ENCODE measurements at regions of chr14 and their contacts with region 1.

Region 1: DNA sequence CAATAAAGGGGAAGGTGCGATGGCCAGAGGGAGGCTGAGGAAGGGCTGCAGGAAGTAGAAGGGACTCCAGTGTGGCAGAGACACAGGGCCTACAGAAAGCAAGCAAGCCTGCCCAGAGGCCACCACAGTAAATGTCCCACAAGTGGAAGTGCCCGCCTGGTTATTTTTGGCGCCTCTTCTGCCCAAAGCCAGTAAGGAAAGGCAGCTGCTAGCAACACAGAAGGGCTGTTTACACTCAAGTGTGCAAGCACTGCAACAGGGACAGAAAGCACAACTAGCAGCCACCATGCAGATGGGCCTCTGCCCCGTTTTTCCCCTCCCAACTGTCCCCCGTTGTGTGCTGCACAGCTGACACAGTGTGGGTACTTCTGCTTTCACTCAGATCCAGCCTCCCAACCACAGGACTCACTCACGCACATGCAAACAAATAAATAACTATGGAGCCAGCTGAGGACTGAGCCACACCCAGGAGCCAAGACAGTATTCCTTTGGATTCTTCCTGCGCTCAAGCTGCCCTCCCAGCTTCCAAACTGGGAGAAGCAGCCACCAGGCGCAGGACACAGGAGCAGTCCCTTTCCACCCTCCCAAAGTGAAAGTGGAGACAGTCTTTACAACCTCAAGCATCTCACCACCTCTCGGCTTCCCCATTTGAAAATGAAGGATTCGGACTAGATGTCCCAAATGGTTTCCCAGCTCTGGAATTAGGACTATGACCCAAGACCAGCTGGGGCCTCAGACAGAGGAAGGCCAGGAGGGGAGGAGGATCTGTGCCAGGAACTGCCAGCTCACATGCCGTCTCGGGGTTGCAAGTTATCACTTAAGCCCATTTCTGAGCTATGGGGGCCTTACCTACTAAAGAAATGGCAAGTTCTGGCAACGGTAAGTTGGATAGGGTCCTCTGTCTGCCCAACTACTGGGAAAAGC is 40.0 kb upstream of the PNMA1 start:
- DNase-seq: peak in 2 of 5 donors; percentile 35 to 69
- H3K4me3 ChIP-seq: peak overlapping the region; percentile 43 to 53
- H3K4me3 Mint-ChIP-seq: peak overlapping the region; percentile 82 to 94 (median 85)
- H3K27ac ChIP-seq: peak overlapping the region; percentile 98
- H3K27ac Mint-ChIP-seq: peak overlapping the region; percentile 92 to 99 (median 98)
- H3K4me1 ChIP-seq: peaks cover 92% of the 10 kb centered on the region
- H3K4me1 Mint-ChIP-seq: peaks cover 75 to 96% (median 86%) of the 10 kb centered on the region in 4 donors
- H3K27me3 ChIP-seq: no peaks in the 10 kb centered on the region
- H3K27me3 Mint-ChIP-seq: no peaks in the 10 kb centered on the region

Region 2: GRCh38 chr14:73686901-73687300 is 67.3 kb before region 1 on chr14:
- CTCF ChIA-PET with region 1: no interaction called
- POLR2A ChIA-PET with region 1: no interaction called
- intact Hi-C with region 1: no loop called
- DNase-seq: no peak
- H3K4me3 ChIP-seq: no peak overlapping the region
- H3K4me3 Mint-ChIP-seq: no peak overlapping the region
- H3K27ac ChIP-seq: no peak overlapping the region
- H3K27ac Mint-ChIP-seq: no peak overlapping the region
- H3K4me1 ChIP-seq: no peaks in the 10 kb centered on the region
- H3K4me1 Mint-ChIP-seq: no peaks in the 10 kb centered on the region
- H3K27me3 ChIP-seq: no peaks in the 10 kb centered on the region
- H3K27me3 Mint-ChIP-seq: no peaks in the 10 kb centered on the region

Region 3: DNA sequence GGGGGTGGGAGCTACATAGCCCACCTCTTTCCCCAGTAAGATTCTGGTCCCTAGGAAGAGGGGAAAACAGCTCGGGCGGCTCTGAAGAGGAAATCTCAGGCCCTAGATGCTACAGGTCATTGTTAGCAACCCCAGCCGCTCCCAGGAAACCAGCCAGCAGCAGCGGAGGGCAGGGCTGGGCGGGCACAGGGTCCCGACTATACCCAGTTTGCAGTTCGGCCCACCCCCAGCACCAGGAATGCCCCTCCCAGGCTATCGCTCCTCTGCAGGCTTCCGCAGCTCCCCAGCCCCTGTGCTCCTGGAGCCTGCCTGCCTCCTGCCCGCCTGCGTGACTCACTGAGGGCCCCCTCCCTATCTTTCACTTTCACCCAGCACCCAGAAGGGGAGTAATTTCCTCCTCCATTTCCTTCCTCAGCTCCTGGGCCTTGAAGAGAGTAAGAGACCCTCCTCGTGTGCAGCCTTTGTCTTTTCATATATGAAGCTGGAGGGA is 12.8 kb before region 1 on chr14:
- CTCF ChIA-PET with region 1: interaction called, 100 read pairs
- POLR2A ChIA-PET with region 1: interaction called, 421 read pairs
- intact Hi-C with region 1: loop called (anchors 1 kb)
- DNase-seq: peak; percentile 56 to 87 (median 62)
- H3K4me3 ChIP-seq: peak overlapping the region; percentile 36 to 49
- H3K4me3 Mint-ChIP-seq: peak overlapping the region; percentile 79 to 90 (median 86)
- H3K27ac ChIP-seq: peak overlapping the region; percentile 66
- H3K27ac Mint-ChIP-seq: peak overlapping the region; percentile 93 to 98 (median 95)
- H3K4me1 ChIP-seq: peaks cover 77% of the 10 kb centered on the region
- H3K4me1 Mint-ChIP-seq: peaks cover 50 to 73% (median 61%) of the 10 kb centered on the region in 4 donors
- H3K27me3 ChIP-seq: no peaks in the 10 kb centered on the region
- H3K27me3 Mint-ChIP-seq: no peaks in the 10 kb centered on the region

Region 4: GRCh38 chr14:73771848-73772638 is 17.8 kb after region 1 on chr14:
- CTCF ChIA-PET with region 1: interaction called, 47 read pairs
- POLR2A ChIA-PET with region 1: interaction called, 164 read pairs
- intact Hi-C with region 1: no loop called
- DNase-seq: peak; percentile 55 to 84 (median 61)
- H3K4me3 ChIP-seq: no peak overlapping the region
- H3K4me3 Mint-ChIP-seq: peak overlapping the region; percentile 55 to 88 (median 62)
- H3K27ac ChIP-seq: peak overlapping the region; percentile 50
- H3K27ac Mint-ChIP-seq: peak overlapping the region; percentile 83 to 96 (median 93)
- H3K4me1 ChIP-seq: peaks cover 78% of the 10 kb centered on the region
- H3K4me1 Mint-ChIP-seq: peaks cover 51 to 83% (median 66%) of the 10 kb centered on the region in 4 donors
- H3K27me3 ChIP-seq: no peaks in the 10 kb centered on the region
- H3K27me3 Mint-ChIP-seq: no peaks in the 10 kb centered on the region

Region 5: GRCh38 chr14:73825551-73826188 is 71.4 kb after region 1 on chr14:
- CTCF ChIA-PET with region 1: interaction called, 19 read pairs
- POLR2A ChIA-PET with region 1: interaction called, 10 read pairs
- intact Hi-C with region 1: loop called (anchors 1 kb)
- DNase-seq: peak; percentile 68 to 75 (median 74)
- H3K4me3 ChIP-seq: no peak overlapping the region
- H3K4me3 Mint-ChIP-seq: no peak overlapping the region
- H3K27ac ChIP-seq: no peak overlapping the region
- H3K27ac Mint-ChIP-seq: peak overlapping the region in 1 of 7 donors; percentile 42
- H3K4me1 ChIP-seq: peaks cover 13% of the 10 kb centered on the region
- H3K4me1 Mint-ChIP-seq: peaks cover 7 to 11% (median 10%) of the 10 kb centered on the region in 4 donors
- H3K27me3 ChIP-seq: no peaks in the 10 kb centered on the region
- H3K27me3 Mint-ChIP-seq: no peaks in the 10 kb centered on the region